ENCODE measurements at regions of chr13 and their contacts with region 1.

Region 1: GRCh38 chr13:110138010-110138699 is 168.8 kb downstream of the COL4A1 start:
- DNase-seq: peak; percentile 85
- H3K4me3 Mint-ChIP-seq: peak overlapping the region; percentile 73
- H3K27ac Mint-ChIP-seq: peak overlapping the region; percentile 59
- H3K4me1 Mint-ChIP-seq: peaks cover 9% of the 10 kb centered on the region
- H3K27me3 Mint-ChIP-seq: peaks cover 41% of the 10 kb centered on the region

Region 2: DNA sequence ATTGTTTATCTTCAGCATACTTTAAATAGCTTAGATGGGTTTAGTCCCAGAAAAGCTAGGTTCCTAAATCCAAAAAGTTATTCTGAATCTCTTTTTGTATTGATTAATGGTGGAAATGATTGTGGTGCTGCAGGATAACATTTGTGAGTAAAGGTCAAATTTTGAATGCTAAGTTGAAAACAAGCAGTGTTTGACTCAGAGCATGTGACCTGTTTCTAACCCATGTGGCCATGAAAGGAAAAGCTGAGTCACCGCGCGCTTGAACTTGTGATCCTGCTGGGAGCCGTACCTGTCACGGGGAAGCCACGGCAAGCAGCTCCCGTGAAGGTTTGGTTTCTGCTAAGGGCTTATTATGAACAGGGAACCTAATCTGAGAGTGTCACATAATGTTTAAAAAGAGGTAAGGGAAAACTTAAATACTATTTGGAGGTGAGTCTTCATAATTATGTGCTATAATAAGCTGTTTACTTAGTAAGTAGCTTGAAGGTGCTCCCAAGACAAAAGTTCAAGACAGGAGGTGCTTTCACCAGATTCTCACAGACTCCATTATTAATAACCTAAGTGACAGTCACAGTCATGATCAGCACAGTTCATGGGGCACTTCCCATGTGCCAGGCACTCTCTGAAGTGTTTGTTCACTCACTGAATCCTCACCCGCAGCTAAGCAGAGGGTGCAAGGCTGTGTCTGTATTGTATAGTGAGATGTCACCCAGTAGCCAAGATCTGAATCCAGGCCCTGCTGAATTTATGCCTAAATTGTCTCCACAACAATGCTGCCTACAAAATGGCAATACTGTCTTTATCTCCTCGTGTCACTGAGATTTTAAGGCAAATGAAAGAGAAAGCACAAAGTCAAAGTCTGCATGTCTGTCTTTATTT is 1222.3 kb before region 1 on chr13:
- CTCF ChIA-PET with region 1: no interaction called
- intact Hi-C with region 1: loop called (anchors 1 kb)
- DNase-seq: peak; percentile 98
- H3K4me3 Mint-ChIP-seq: peak overlapping the region; percentile 68
- H3K27ac Mint-ChIP-seq: peak overlapping the region; percentile 87
- H3K4me1 Mint-ChIP-seq: peaks cover 20% of the 10 kb centered on the region
- H3K27me3 Mint-ChIP-seq: peaks cover 8% of the 10 kb centered on the region

Region 3: DNA sequence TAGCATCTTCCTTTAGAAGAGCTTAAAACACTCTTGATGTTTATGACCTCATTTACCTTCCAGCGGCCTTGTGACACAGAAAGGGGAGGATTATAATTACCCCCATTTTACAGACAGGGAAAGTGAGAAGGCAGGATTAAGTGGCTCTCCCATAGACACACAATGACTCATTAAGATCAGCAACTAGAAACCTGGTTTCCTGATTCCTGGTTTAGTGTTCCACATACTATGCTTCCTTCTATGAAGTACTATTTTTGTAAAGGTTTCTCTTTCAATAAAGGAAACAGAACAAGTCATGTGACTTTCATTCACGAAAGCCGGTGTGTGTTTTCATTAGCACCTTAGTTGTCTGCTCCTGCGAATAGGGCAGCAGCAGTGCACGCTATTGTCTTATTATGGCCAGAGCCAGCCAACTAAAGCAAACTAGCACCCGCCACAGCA is 360.0 kb before region 1 on chr13:
- CTCF ChIA-PET with region 1: no interaction called
- intact Hi-C with region 1: loop called (anchors 2 kb)
- DNase-seq: peak; percentile 21
- H3K4me3 Mint-ChIP-seq: peak overlapping the region; percentile 27
- H3K27ac Mint-ChIP-seq: peak overlapping the region; percentile 24
- H3K4me1 Mint-ChIP-seq: peaks cover 59% of the 10 kb centered on the region
- H3K27me3 Mint-ChIP-seq: no peaks in the 10 kb centered on the region

Region 4: DNA sequence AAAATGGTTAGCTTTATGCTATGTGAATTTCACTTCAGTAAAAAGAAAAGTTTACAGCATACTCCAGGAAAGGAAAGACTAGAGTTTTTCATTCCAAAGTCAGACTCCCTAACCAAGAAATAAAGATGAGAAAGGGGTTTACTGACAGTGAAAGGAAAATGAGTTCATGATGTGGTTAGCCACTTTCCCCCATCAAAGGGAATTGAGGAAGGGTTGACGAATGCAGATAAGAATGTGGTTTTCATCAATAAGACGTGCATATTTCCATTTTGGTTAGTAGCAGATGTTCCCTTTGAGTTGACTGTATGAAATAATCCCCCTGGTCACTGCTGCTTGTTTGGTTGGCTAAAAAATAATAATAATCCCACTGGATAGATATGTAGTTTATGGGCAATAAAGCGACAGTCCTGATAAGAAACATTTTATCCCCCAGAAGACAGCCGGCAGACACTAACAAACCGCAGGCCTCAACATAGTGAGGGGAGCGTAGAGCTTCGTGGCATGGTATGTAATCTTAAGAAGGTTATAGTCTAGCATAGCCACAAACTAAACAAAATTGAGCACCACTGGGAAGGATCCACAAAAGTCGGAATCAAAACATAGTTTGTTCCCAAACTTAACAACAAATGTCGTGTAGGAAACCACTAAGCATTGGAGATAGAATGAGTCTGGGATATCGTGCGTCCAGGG is 283.7 kb after region 1 on chr13:
- CTCF ChIA-PET with region 1: no interaction called
- intact Hi-C with region 1: loop called (anchors 1 kb)
- DNase-seq: peak; percentile 51
- H3K4me3 Mint-ChIP-seq: no peak overlapping the region
- H3K27ac Mint-ChIP-seq: no peak overlapping the region
- H3K4me1 Mint-ChIP-seq: peaks cover 23% of the 10 kb centered on the region
- H3K27me3 Mint-ChIP-seq: peaks cover 87% of the 10 kb centered on the region